ENCODE measurements at regions of chr1 and their contacts with region 1.

Region 1: GRCh38 chr1:20212685-20213331 is 26.5 kb upstream of the PLA2G2C start:
- DNase-seq: no peak
- ATAC-seq: peak; percentile 89
- H3K4me3 ChIP-seq: no peak overlapping the region
- H3K27ac ChIP-seq: no peak overlapping the region
- H3K4me1 ChIP-seq: no peaks in the 10 kb centered on the region; the same call in 1 of the 2 replicates
- H3K27me3 ChIP-seq: peaks cover 3 to 10% of the 10 kb centered on the region in 2 experiments; a peak in 2 of 4 replicates
- CTCF ChIP-seq: peak; percentile 67 to 72 (median 71)
- EP300 ChIP-seq: no peak
- POLR2A ChIP-seq: no peak
- RAD21 ChIP-seq: peak; percentile 77

Region 2: GRCh38 chr1:20227704-20228103 is 14.9 kb after region 1 on chr1:
- CTCF ChIA-PET with region 1: interaction called, 13 read pairs
- POLR2A ChIA-PET with region 1: interaction called, 3 read pairs
- RAD21 ChIA-PET with region 1: no interaction called
- SMC1A ChIA-PET with region 1: interaction called, 4 read pairs
- in situ Hi-C with region 1: no loop called
- intact Hi-C with region 1: no loop called
- DNase-seq: no peak
- ATAC-seq: no peak
- H3K4me3 ChIP-seq: no peak overlapping the region
- H3K27ac ChIP-seq: no peak overlapping the region
- H3K4me1 ChIP-seq: no peaks in the 10 kb centered on the region
- H3K27me3 ChIP-seq: peaks cover 1 to 3% of the 10 kb centered on the region in 2 experiments; a peak in 2 of 4 replicates
- CTCF ChIP-seq: no peak
- EP300 ChIP-seq: no peak
- POLR2A ChIP-seq: no peak
- RAD21 ChIP-seq: no peak

Region 3: DNA sequence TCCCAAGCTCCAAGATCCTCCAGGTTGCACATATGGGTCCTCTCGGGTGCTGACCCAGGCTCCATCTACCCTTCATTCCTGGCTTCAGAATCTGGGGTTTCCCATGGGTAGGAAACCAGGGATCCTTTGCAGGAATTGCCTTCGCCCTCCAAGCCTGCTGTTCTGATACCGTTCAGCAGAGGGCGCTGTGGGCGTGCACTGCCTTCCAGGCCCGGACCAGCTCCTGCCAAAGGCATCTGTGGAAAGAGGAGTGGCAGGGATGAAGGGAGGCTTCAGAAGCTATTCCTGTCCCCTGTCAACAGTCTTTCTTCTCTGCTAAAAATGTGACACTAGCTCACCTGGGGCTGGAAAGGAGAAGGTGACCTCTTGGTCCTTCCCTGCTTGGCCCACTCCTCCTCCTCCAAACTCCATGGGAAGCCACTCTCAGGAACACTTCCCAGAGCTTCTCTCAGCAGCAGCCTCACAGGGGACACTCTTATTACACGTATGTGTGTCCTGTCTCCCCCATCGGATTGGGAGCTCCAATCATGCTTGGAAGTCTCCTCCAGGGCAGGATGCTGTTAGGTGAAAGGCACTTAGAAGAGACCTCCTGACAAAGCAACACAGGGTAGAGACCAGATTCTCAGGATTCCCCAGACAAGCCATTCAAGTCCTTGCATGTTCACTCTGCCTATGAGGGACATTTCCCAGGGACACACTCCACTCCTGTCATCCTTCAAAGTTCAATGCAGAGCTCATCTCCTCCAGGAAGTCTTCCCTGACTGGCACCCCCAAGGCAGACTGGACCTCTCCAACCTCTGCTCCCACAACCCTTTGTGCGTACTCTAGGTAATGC is 149.2 kb after region 1 on chr1:
- CTCF ChIA-PET with region 1: interaction called, 10 read pairs
- POLR2A ChIA-PET with region 1: no interaction called
- RAD21 ChIA-PET with region 1: no interaction called
- SMC1A ChIA-PET with region 1: interaction called, 3 read pairs
- in situ Hi-C with region 1: no loop called
- intact Hi-C with region 1: loop called (anchors 10 kb)
- DNase-seq: no peak
- ATAC-seq: no peak
- H3K4me3 ChIP-seq: no peak overlapping the region
- H3K27ac ChIP-seq: no peak overlapping the region
- H3K4me1 ChIP-seq: peaks cover 6% of the 10 kb centered on the region; the same call in 1 of the 2 replicates
- H3K27me3 ChIP-seq: peaks cover 1 to 7% of the 10 kb centered on the region in 2 experiments
- CTCF ChIP-seq: peak; percentile 51 to 77 (median 73)
- EP300 ChIP-seq: no peak
- POLR2A ChIP-seq: no peak
- RAD21 ChIP-seq: peak; percentile 52

Region 4: GRCh38 chr1:20430355-20431175 is 217.8 kb after region 1 on chr1:
- CTCF ChIA-PET with region 1: interaction called, 13 read pairs
- POLR2A ChIA-PET with region 1: no interaction called
- RAD21 ChIA-PET with region 1: interaction called, 3 read pairs
- SMC1A ChIA-PET with region 1: interaction called, 3 read pairs
- in situ Hi-C with region 1: no loop called
- intact Hi-C with region 1: loop called (anchors 5 kb)
- DNase-seq: no peak
- ATAC-seq: peak; percentile 63
- H3K4me3 ChIP-seq: no peak overlapping the region
- H3K27ac ChIP-seq: no peak overlapping the region
- H3K4me1 ChIP-seq: peaks cover 8% of the 10 kb centered on the region
- H3K27me3 ChIP-seq: 0 out of 4 replicates have a peak, but pooled peaks cover 0 to 2% of the 10 kb centered on the region in 2 experiments
- CTCF ChIP-seq: peak; percentile 57 to 83 (median 66)
- EP300 ChIP-seq: no peak
- POLR2A ChIP-seq: no peak
- RAD21 ChIP-seq: peak; percentile 90